Kidney (tissue), 22 donors: ENCODE measurements at regions of chr17 and their contacts with region 1.

Region 1: GRCh38 chr17:76397687-76398487 is 13.5 kb downstream of the SPHK1 start:
- DNase-seq: peak; percentile 93 to 95 (median 94)
- H3K4me3 ChIP-seq: no peak overlapping the region
- H3K27ac ChIP-seq: no peak overlapping the region
- H3K4me1 ChIP-seq: no peaks in the 10 kb centered on the region
- H3K27me3 ChIP-seq: no peaks in the 10 kb centered on the region
- CTCF ChIP-seq: peak; percentile 99

Region 2: DNA sequence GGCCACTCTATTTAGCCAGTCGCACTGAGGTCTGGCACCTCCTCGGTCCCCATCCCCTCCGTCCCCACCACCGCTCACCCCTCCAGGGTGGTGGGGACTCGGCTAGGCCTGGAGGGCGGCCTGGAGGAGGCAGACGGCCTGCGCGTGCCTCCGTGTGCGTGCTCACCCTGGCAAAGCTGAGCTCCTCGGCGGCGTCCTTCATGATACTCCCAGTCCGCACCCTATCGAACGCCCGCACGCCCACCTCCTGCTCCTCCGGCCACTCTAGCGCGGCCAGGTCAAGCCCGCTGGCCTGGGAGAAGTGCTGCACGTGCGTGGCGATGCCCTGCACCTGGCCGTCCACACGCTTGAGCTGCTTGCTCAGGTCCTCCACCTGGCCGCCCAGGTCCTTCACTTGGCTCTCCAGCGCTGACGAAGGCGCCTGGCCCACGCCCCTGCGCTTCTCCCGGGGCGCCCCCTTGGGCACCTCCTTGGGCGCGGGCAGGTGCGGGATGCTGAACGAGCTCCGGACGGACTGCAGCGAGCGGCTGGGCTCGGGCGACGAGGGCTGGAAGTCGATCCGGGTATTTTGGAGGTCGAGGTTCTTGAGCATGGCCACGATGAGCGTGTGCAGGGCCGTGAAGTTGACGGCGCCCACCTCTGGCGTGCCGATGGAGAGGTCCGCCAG is 90.5 kb before region 1 on chr17:
- intact Hi-C with region 1: loop called (anchors 5 kb)
- DNase-seq: no peak
- H3K4me3 ChIP-seq: no peak overlapping the region
- H3K27ac ChIP-seq: no peak overlapping the region
- H3K4me1 ChIP-seq: no peaks in the 10 kb centered on the region
- H3K27me3 ChIP-seq: no peaks in the 10 kb centered on the region
- CTCF ChIP-seq: no peak